A673 (cell line): ENCODE measurements at regions of chr12 and their contacts with region 1.

Region 1: GRCh38 chr12:55619354-55620138 is 17.1 kb upstream of the OR10P1 start:
- DNase-seq: peak; percentile 95
- H3K4me3 ChIP-seq: no peak overlapping the region
- H3K27ac ChIP-seq: no peak overlapping the region
- H3K4me1 ChIP-seq: no peaks in the 10 kb centered on the region
- H3K27me3 ChIP-seq: peaks cover 40% of the 10 kb centered on the region
- CTCF ChIP-seq: peak; percentile 90

Region 2: DNA sequence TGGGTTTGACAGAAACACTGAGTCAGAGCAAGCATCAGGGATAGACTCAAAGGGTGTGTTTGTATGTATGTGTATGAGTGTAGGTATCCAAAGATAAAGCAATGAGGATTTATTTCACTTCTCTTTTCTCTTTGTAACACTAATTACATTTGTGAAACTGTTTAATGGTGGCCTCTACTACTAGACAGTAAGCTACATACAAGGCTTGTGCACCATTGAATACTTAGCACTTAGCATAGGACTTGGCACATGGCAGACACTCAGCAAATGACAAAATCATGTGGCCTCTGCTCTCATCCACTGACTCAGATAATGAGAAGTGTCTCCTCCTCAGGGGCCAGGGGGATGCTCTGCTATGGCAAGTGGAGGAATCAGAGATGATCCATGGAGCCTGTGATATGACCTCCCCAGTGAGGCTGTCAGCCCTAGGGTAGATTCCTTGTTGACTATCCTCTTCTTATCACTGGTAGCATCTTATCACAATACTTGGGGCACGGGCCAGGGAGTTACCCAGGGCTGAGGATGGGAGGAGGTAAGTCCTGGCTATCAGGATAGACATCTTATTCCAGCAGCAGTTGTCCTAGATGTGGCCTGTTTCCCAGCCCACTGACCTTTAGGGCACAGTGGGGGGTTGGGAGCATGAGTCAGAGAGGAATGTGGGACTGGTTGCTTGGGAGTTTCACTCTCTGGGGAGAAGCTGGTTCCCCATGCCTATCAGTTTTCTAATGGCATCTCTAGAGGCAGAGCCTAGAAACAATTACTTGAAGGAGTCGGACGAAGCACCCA is 1752.1 kb before region 1 on chr12:
- CTCF ChIA-PET with region 1: no interaction called
- POLR2A ChIA-PET with region 1: no interaction called
- intact Hi-C with region 1: no loop called
- DNase-seq: no peak
- H3K4me3 ChIP-seq: no peak overlapping the region
- H3K27ac ChIP-seq: no peak overlapping the region
- H3K4me1 ChIP-seq: no peaks in the 10 kb centered on the region
- H3K27me3 ChIP-seq: no peaks in the 10 kb centered on the region
- CTCF ChIP-seq: no peak

Region 3: GRCh38 chr12:54993161-54993835 is 626.2 kb before region 1 on chr12:
- CTCF ChIA-PET with region 1: no interaction called
- POLR2A ChIA-PET with region 1: no interaction called
- intact Hi-C with region 1: loop called (anchors 10 kb)
- DNase-seq: peak; percentile 76
- H3K4me3 ChIP-seq: no peak overlapping the region
- H3K27ac ChIP-seq: no peak overlapping the region
- H3K4me1 ChIP-seq: no peaks in the 10 kb centered on the region
- H3K27me3 ChIP-seq: no peaks in the 10 kb centered on the region
- CTCF ChIP-seq: peak; percentile 82

Region 4: GRCh38 chr12:55188974-55189556 is 430.5 kb before region 1 on chr12:
- CTCF ChIA-PET with region 1: interaction called, 5 read pairs
- POLR2A ChIA-PET with region 1: no interaction called
- intact Hi-C with region 1: loop called (anchors 1 kb)
- DNase-seq: peak; percentile 83
- H3K4me3 ChIP-seq: no peak overlapping the region
- H3K27ac ChIP-seq: no peak overlapping the region
- H3K4me1 ChIP-seq: no peaks in the 10 kb centered on the region
- H3K27me3 ChIP-seq: peaks cover 54% of the 10 kb centered on the region
- CTCF ChIP-seq: peak; percentile 81

Region 5: GRCh38 chr12:55226523-55226922 is 393.0 kb before region 1 on chr12:
- CTCF ChIA-PET with region 1: no interaction called
- POLR2A ChIA-PET with region 1: no interaction called
- intact Hi-C with region 1: no loop called
- DNase-seq: no peak
- H3K4me3 ChIP-seq: no peak overlapping the region
- H3K27ac ChIP-seq: no peak overlapping the region
- H3K4me1 ChIP-seq: no peaks in the 10 kb centered on the region
- H3K27me3 ChIP-seq: peaks cover 30% of the 10 kb centered on the region
- CTCF ChIP-seq: no peak